Ascending aorta (tissue), 2 donors: ENCODE measurements at regions of chr1 and their contacts with region 1.

Region 1: GRCh38 chr1:160149716-160150115 is 1.7 kb upstream of the ATP1A4 start:
- DNase-seq: no peak
- H3K4me3 ChIP-seq: no peak overlapping the region
- H3K27ac ChIP-seq: peak overlapping the region; percentile 67 to 72
- H3K4me1 ChIP-seq: peaks cover 5 to 12% of the 10 kb centered on the region in 2 donors
- H3K27me3 ChIP-seq: no peaks in the 10 kb centered on the region
- CTCF ChIP-seq: no peak

Region 2: GRCh38 chr1:160131803-160132565 is 17.7 kb before region 1 on chr1:
- intact Hi-C with region 1: loop called (anchors 2 kb)
- DNase-seq: peak; percentile 40 to 90
- H3K4me3 ChIP-seq: no peak overlapping the region
- H3K27ac ChIP-seq: peak overlapping the region; percentile 86 to 96
- H3K4me1 ChIP-seq: peaks cover 10 to 21% of the 10 kb centered on the region in 2 donors
- H3K27me3 ChIP-seq: no peaks in the 10 kb centered on the region
- CTCF ChIP-seq: no peak